Astrocyte of the cerebellum (primary cell): ENCODE measurements at regions of chr9 and their contacts with region 1.

Region 1: GRCh38 chr9:133417541-133418461 is at the start of gene REXO4:
- DNase-seq: peak; percentile 57
- H3K4me3 ChIP-seq: peak within 1 kb of the TSS; percentile 88
- CTCF ChIP-seq: no peak

Region 2: GRCh38 chr9:133356391-133357091 is 61.3 kb before region 1 on chr9 and contains the starts of genes SURF1 and SURF2:
- in situ Hi-C with region 1: no loop called
- DNase-seq: no peak
- H3K4me3 ChIP-seq: peak within 1 kb of the TSS; percentile 76
- CTCF ChIP-seq: no peak

Region 3: DNA sequence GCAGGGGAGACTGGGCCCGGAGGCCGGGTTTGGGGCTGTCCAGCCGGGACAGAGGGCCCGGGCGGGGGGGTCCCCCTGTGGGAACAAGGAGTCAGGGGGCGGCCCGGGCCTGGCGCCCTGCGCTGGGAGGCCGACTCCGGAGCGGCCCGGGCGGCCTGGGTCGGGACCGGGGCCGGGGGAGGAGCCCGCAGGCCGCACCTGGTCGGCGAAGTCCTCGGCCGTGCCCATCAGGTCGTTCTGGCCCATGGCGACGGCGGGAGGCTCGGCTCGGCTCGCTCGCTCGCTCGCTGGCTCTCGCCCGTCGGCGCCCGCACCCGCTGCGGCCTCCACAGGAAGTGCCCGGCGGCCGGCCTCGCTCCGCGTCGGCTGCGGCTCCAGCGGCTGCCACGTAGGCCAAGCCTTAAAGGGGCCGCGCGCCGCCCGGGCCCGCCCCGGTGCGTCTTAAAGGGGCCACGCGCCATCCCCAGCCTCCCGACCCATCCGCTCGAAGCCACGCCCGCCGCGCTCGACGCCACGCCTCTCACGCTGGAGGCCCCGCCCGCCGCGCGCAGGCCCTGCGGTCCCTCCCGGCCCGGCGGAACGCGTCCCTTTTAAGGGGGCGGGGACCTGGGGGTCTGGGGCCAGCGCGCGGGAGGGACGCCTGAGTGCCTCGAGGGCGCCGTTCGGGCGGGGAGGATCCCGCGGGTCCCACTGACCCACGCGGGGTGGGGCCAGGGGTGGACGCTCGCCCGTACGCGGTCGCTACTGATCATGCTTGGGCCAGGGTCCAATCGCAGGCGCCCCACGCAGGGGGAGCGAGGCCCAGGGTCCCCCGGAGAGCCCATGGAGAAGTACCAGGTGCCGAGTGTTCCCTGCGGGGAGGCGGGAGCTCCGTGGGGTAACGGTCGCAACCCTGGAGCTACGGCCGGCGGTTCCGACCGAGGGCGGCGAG is 41.8 kb before region 1 on chr9 and contains the starts of genes STKLD1 and SURF4:
- in situ Hi-C with region 1: loop called (anchors 5 kb)
- DNase-seq: peak; percentile 88
- H3K4me3 ChIP-seq: peak within 1 kb of the TSS; percentile 79
- CTCF ChIP-seq: no peak

Region 4: GRCh38 chr9:133459476-133460404 is 41.9 kb after region 1 on chr9 and contains the start of gene CACFD1:
- in situ Hi-C with region 1: loop called (anchors 5 kb)
- DNase-seq: peak; percentile 80
- H3K4me3 ChIP-seq: peak within 1 kb of the TSS; percentile 68
- CTCF ChIP-seq: no peak

Region 5: GRCh38 chr9:133572821-133573361 is 155.1 kb after region 1 on chr9:
- in situ Hi-C with region 1: no loop called
- DNase-seq: no peak
- H3K4me3 ChIP-seq: no peak overlapping the region
- CTCF ChIP-seq: no peak